IMR-90 (cell line): ENCODE measurements at regions of chr2 and their contacts with region 1.

Region 1: GRCh38 chr2:240851078-240851991 is 17.3 kb upstream of the AGXT start:
- DNase-seq: peak; percentile 67
- ATAC-seq: peak; percentile 99
- H3K4me3 ChIP-seq: no peak overlapping the region
- H3K27ac ChIP-seq: no peak overlapping the region
- H3K4me1 ChIP-seq: no peaks in the 10 kb centered on the region
- H3K27me3 ChIP-seq: peaks cover 4% of the 10 kb centered on the region; the same call in 1 of the 2 replicates
- CTCF ChIP-seq: peak; percentile 93
- POLR2A ChIP-seq: no peak
- RAD21 ChIP-seq: peak; percentile 96

Region 2: GRCh38 chr2:240983361-240983995 is 132.1 kb after region 1 on chr2:
- CTCF ChIA-PET with region 1: no interaction called
- POLR2A ChIA-PET with region 1: no interaction called
- dilution Hi-C with region 1: no loop called
- in situ Hi-C with region 1: no loop called
- intact Hi-C with region 1: no loop called
- DNase-seq: peak; percentile 16
- ATAC-seq: peak; percentile 24; the same call in 1 of the 2 replicates
- H3K4me3 ChIP-seq: no peak overlapping the region
- H3K27ac ChIP-seq: no peak overlapping the region
- H3K4me1 ChIP-seq: peaks cover 15% of the 10 kb centered on the region
- H3K27me3 ChIP-seq: peaks cover 7% of the 10 kb centered on the region; the same call in 1 of the 2 replicates
- CTCF ChIP-seq: peak; percentile 36
- POLR2A ChIP-seq: no peak
- RAD21 ChIP-seq: no peak

Region 3: GRCh38 chr2:240998120-240998994 is 147.0 kb after region 1 on chr2 and contains the start of gene SNED1:
- CTCF ChIA-PET with region 1: no interaction called
- POLR2A ChIA-PET with region 1: no interaction called
- dilution Hi-C with region 1: no loop called
- in situ Hi-C with region 1: no loop called
- intact Hi-C with region 1: loop called (anchors 2 kb)
- DNase-seq: peak; percentile 66
- ATAC-seq: peak; percentile 94
- H3K4me3 ChIP-seq: peak within 1 kb of the TSS; percentile 55
- H3K27ac ChIP-seq: peak within 1 kb of the TSS; percentile 62
- H3K4me1 ChIP-seq: peaks cover 26% of the 10 kb centered on the region; the same call in 1 of the 2 replicates
- H3K27me3 ChIP-seq: no peaks in the 10 kb centered on the region
- CTCF ChIP-seq: no peak
- POLR2A ChIP-seq: no peak
- RAD21 ChIP-seq: no peak
- total RNA-seq, gene SNED1: 1.1 and 1.4 TPM in 2 replicates

Region 4: DNA sequence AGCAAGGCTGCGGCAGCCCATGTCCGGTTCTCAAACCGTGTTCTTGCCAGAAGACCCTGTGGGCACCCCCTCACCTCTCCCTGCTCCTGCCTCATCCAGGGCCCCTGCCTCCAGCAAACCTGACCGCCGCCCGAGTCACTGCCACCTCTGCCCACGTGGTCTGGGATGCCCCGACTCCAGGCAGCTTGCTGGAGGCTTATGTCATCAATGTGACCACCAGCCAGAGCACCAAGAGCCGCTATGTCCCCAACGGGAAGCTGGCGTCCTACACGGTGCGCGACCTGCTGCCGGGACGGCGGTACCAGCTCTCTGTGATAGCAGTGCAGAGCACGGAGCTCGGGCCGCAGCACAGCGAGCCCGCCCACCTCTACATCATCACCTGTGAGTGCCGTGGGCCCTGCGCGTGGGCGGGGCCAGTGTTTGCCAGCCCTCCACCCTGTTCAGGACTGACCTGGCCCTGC is 218.5 kb after region 1 on chr2:
- CTCF ChIA-PET with region 1: no interaction called
- POLR2A ChIA-PET with region 1: no interaction called
- dilution Hi-C with region 1: no loop called
- in situ Hi-C with region 1: loop called (anchors 10 kb)
- intact Hi-C with region 1: no loop called
- DNase-seq: no peak
- ATAC-seq: no peak
- H3K4me3 ChIP-seq: no peak overlapping the region
- H3K27ac ChIP-seq: no peak overlapping the region
- H3K4me1 ChIP-seq: no peaks in the 10 kb centered on the region
- H3K27me3 ChIP-seq: no peaks in the 10 kb centered on the region
- CTCF ChIP-seq: no peak
- POLR2A ChIP-seq: no peak
- RAD21 ChIP-seq: no peak

Region 5: DNA sequence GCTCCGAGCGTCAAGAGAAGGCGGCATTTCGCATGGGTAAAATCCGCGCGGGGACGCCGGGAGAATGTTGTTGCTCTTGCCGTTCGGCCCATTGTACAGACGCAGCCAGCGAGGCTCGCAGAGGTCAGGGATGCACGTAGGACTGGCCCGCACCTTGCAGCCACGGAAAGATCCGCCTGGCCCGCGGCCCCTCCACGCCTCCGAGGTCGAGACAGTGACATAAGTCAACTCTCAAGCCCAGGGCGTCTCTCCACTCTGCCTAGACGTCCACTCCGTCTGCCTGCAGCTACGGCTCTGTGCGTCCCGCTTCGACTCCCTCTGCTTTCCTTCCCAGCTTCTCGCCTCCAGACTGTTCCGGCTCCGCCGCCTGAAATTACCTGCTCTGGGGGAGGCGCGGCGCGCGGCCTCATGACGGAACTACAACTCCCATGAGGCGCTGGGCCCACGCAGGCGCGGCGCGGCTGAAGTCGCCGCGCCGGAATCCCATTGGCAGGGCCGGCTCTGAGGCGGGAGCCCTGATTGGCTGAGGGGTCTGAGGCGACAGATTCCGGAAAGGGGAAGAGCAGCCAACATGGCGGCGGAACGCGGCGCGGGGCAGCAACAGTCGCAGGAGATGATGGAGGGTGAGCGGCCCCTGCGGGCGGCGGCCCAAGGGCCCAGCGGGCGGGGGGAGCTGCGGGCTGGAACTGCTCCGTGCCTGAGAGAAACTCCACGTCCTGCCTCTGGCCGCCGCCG is 298.8 kb after region 1 on chr2 and contains the start of gene PPP1R7:
- CTCF ChIA-PET with region 1: no interaction called
- POLR2A ChIA-PET with region 1: no interaction called
- dilution Hi-C with region 1: no loop called
- in situ Hi-C with region 1: no loop called
- intact Hi-C with region 1: loop called (anchors 2 kb)
- DNase-seq: peak; percentile 90
- ATAC-seq: peak; percentile 90
- H3K4me3 ChIP-seq: peak within 1 kb of the TSS; percentile 75
- H3K27ac ChIP-seq: peak within 1 kb of the TSS; percentile 16
- H3K4me1 ChIP-seq: peaks cover 7% of the 10 kb centered on the region; the same call in 1 of the 2 replicates
- H3K27me3 ChIP-seq: no peaks in the 10 kb centered on the region
- CTCF ChIP-seq: 0 out of 2 replicates have a peak, but pooled peaks have one; percentile 25
- POLR2A ChIP-seq: peak; percentile 80
- RAD21 ChIP-seq: 0 out of 2 replicates have a peak, but pooled peaks have one; percentile 22
- total RNA-seq, gene PPP1R7: 60.8 and 104 TPM in 2 replicates

Region 6: DNA sequence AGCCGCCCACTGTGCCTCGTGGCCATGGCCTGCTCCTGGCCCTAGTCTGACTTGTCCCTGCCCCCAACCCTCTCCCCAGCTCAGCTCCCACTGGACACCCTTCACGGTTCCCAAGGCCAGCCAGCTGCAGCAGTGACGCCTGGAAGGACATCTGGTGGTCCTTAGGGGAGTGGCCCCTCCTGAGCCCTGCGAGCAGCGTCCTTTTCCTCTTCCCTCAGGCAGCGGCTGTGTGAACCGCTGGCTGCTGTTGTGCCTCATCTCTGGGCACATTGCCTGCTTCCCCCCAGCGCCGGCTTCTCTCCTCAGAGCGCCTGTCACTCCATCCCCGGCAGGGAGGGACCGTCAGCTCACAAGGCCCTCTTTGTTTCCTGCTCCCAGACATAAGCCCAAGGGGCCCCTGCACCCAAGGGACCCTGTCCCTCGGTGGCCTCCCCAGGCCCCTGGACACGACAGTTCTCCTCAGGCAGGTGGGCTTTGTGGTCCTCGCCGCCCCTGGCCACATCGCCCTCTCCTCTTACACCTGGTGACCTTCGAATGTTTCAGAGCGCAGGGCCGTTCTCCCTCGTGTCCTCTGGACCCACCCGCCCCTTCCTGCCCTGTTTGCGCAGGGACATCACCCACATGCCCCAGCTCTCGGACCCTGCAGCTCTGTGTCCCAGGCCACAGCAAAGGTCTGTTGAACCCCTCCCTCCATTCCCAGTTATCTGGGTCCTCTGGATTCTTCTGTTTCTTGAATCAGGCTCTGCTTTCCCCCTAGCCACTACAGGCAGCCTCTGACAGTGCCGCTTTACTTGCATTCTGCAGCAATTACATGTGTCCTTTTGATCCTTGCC is 372.9 kb after region 1 on chr2:
- CTCF ChIA-PET with region 1: interaction called, 4 read pairs
- POLR2A ChIA-PET with region 1: no interaction called
- dilution Hi-C with region 1: no loop called
- in situ Hi-C with region 1: loop called (anchors 5 kb)
- intact Hi-C with region 1: loop called (anchors 5 kb)
- DNase-seq: peak; percentile 66
- ATAC-seq: peak; percentile 55
- H3K4me3 ChIP-seq: no peak overlapping the region
- H3K27ac ChIP-seq: no peak overlapping the region; the same call in 1 of the 2 replicates
- H3K4me1 ChIP-seq: peaks cover 9% of the 10 kb centered on the region; the same call in 1 of the 2 replicates
- H3K27me3 ChIP-seq: no peaks in the 10 kb centered on the region
- CTCF ChIP-seq: 0 out of 2 replicates have a peak, but pooled peaks have one; percentile 13
- POLR2A ChIP-seq: no peak; the same call in 1 of the 2 replicates
- RAD21 ChIP-seq: peak; percentile 14; the same call in 1 of the 2 replicates